CD4-positive, alpha-beta memory T cell (primary cell): ENCODE measurements at regions of chr9 and their contacts with region 1.

Region 1: GRCh38 chr9:121399883-121400607 is 30.0 kb upstream of the STOM start:
- DNase-seq: peak in 4 of 5 donors; percentile 52 to 62 (median 60)
- H3K4me3 ChIP-seq: no peak overlapping the region
- H3K4me3 Mint-ChIP-seq: no peak overlapping the region
- H3K27ac ChIP-seq: no peak overlapping the region
- H3K27ac Mint-ChIP-seq: no peak overlapping the region
- H3K4me1 ChIP-seq: no peaks in the 10 kb centered on the region
- H3K4me1 Mint-ChIP-seq: peaks cover 0 to 2% (median 0%) of the 10 kb centered on the region in 4 donors
- H3K27me3 ChIP-seq: no peaks in the 10 kb centered on the region
- H3K27me3 Mint-ChIP-seq: peaks cover 0 to 2% of the 10 kb centered on the region in 2 donors

Region 2: DNA sequence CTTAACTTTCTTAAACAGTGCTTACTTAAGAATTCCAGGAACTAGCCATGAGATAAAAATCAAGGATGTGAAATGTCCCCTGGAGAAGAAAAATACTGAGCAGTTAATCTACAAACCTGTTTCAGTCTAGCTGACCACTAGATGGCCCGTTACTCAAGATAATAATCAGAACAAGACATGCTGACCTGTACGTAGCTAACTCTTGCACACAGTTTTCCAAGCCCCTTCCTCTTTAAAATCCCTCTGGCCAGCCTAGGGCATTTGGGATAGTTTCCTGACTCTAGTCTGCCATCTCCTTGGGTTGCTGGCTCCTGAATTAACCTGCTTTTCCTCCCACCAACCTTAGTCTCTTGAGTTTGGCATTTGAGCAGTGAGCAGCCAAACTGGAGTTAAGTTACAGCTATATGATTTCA is 414.2 kb before region 1 on chr9:
- CTCF ChIA-PET with region 1: no interaction called
- POLR2A ChIA-PET with region 1: no interaction called
- intact Hi-C with region 1: loop called (anchors 2 kb)
- DNase-seq: no peak
- H3K4me3 ChIP-seq: no peak overlapping the region
- H3K4me3 Mint-ChIP-seq: no peak overlapping the region
- H3K27ac ChIP-seq: no peak overlapping the region
- H3K27ac Mint-ChIP-seq: no peak overlapping the region
- H3K4me1 ChIP-seq: no peaks in the 10 kb centered on the region
- H3K4me1 Mint-ChIP-seq: peaks cover 0 to 5% (median 2%) of the 10 kb centered on the region in 4 donors
- H3K27me3 ChIP-seq: no peaks in the 10 kb centered on the region
- H3K27me3 Mint-ChIP-seq: peaks cover 0 to 2% of the 10 kb centered on the region in 2 donors

Region 3: DNA sequence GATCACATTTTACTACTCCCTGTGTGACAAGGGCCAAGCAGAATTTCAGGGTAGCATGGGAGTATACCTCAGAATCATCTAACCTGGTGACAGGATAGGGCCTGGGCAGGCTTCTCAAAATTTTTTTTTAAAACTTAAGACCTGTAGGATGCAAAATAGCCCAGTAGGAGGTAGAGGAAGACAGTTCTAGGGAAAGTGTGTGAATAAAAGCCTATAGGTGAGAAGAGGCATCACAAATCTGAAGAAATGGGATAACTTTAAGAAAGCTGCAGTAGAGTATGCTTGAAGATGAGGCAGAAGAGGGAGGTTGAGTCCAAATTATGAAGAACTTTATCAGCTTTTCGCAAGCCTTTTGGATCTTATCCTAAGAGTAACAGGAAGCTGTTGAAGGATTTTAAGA is 293.0 kb before region 1 on chr9:
- CTCF ChIA-PET with region 1: no interaction called
- POLR2A ChIA-PET with region 1: no interaction called
- intact Hi-C with region 1: loop called (anchors 2 kb)
- DNase-seq: peak in 4 of 5 donors; percentile 37 to 48 (median 42)
- H3K4me3 ChIP-seq: no peak overlapping the region
- H3K4me3 Mint-ChIP-seq: no peak overlapping the region
- H3K27ac ChIP-seq: no peak overlapping the region
- H3K27ac Mint-ChIP-seq: peak overlapping the region in 6 of 7 donors; percentile 9 to 80 (median 44)
- H3K4me1 ChIP-seq: no peaks in the 10 kb centered on the region
- H3K4me1 Mint-ChIP-seq: peaks cover 20 to 37% (median 22%) of the 10 kb centered on the region in 4 donors
- H3K27me3 ChIP-seq: no peaks in the 10 kb centered on the region
- H3K27me3 Mint-ChIP-seq: no peaks in the 10 kb centered on the region

Region 4: DNA sequence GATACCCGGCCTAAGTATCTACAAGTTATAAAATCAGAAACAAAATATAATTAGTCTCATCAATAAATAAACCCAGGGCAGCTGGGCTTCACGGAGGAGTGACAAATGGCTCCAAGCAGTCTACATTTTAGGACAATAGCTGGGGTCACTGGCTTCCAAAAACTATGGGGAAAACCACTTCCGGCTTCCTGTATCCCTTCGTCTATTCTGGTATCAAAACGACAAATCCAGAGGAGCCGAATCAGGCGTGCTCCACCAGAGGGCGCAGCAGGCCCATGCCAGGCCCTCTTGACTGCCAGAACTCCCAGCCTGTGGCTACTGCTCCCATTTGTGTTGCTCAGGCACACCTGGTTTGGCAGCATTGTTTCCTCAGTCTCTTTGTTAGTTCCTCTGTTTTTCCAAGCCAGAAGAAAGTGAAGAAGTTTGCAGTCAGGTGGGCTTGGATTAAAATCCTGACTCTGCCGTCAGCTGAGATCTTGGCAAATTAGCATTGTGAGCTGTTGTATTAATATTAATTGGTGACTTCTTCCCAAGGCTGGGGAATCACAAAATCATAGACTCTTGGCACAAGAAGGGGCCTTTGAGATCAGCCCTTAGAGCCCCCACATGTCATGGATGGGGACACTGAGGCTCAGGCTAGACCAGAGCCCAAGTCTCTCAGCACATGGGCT is 186.8 kb before region 1 on chr9:
- CTCF ChIA-PET with region 1: interaction called, 26 read pairs
- POLR2A ChIA-PET with region 1: no interaction called
- intact Hi-C with region 1: loop called (anchors 2 kb)
- DNase-seq: peak; percentile 40 to 66 (median 49)
- H3K4me3 ChIP-seq: no peak overlapping the region
- H3K4me3 Mint-ChIP-seq: no peak overlapping the region
- H3K27ac ChIP-seq: no peak overlapping the region
- H3K27ac Mint-ChIP-seq: peak overlapping the region in 1 of 7 donors; percentile 47
- H3K4me1 ChIP-seq: peaks cover 5% of the 10 kb centered on the region
- H3K4me1 Mint-ChIP-seq: peaks cover 0 to 7% (median 3%) of the 10 kb centered on the region in 4 donors
- H3K27me3 ChIP-seq: no peaks in the 10 kb centered on the region
- H3K27me3 Mint-ChIP-seq: no peaks in the 10 kb centered on the region

Region 5: GRCh38 chr9:121350993-121351561 is 49.0 kb before region 1 on chr9:
- CTCF ChIA-PET with region 1: interaction called, 10 read pairs
- POLR2A ChIA-PET with region 1: no interaction called
- intact Hi-C with region 1: no loop called
- DNase-seq: no peak
- H3K4me3 ChIP-seq: no peak overlapping the region
- H3K4me3 Mint-ChIP-seq: no peak overlapping the region
- H3K27ac ChIP-seq: no peak overlapping the region
- H3K27ac Mint-ChIP-seq: peak overlapping the region in 1 of 7 donors; percentile 18
- H3K4me1 ChIP-seq: peaks cover 55% of the 10 kb centered on the region
- H3K4me1 Mint-ChIP-seq: peaks cover 27 to 54% (median 41%) of the 10 kb centered on the region in 4 donors
- H3K27me3 ChIP-seq: no peaks in the 10 kb centered on the region
- H3K27me3 Mint-ChIP-seq: no peaks in the 10 kb centered on the region

Region 6: GRCh38 chr9:121376214-121376830 is 23.7 kb before region 1 on chr9:
- CTCF ChIA-PET with region 1: interaction called, 30 read pairs
- POLR2A ChIA-PET with region 1: interaction called, 3 read pairs
- intact Hi-C with region 1: loop called (anchors 1 kb)
- DNase-seq: peak in 3 of 5 donors; percentile 24 to 30 (median 29)
- H3K4me3 ChIP-seq: no peak overlapping the region
- H3K4me3 Mint-ChIP-seq: no peak overlapping the region
- H3K27ac ChIP-seq: no peak overlapping the region
- H3K27ac Mint-ChIP-seq: no peak overlapping the region
- H3K4me1 ChIP-seq: peaks cover 3% of the 10 kb centered on the region
- H3K4me1 Mint-ChIP-seq: peaks cover 9 to 21% (median 10%) of the 10 kb centered on the region in 4 donors
- H3K27me3 ChIP-seq: no peaks in the 10 kb centered on the region
- H3K27me3 Mint-ChIP-seq: no peaks in the 10 kb centered on the region

Region 7: GRCh38 chr9:121383715-121384114 is 16.3 kb before region 1 on chr9:
- CTCF ChIA-PET with region 1: interaction called, 30 read pairs
- POLR2A ChIA-PET with region 1: no interaction called
- intact Hi-C with region 1: no loop called
- DNase-seq: no peak
- H3K4me3 ChIP-seq: no peak overlapping the region
- H3K4me3 Mint-ChIP-seq: no peak overlapping the region
- H3K27ac ChIP-seq: no peak overlapping the region
- H3K27ac Mint-ChIP-seq: no peak overlapping the region
- H3K4me1 ChIP-seq: no peaks in the 10 kb centered on the region
- H3K4me1 Mint-ChIP-seq: no peaks in the 10 kb centered on the region
- H3K27me3 ChIP-seq: no peaks in the 10 kb centered on the region
- H3K27me3 Mint-ChIP-seq: peaks cover 2 to 3% of the 10 kb centered on the region in 2 donors

Region 8: DNA sequence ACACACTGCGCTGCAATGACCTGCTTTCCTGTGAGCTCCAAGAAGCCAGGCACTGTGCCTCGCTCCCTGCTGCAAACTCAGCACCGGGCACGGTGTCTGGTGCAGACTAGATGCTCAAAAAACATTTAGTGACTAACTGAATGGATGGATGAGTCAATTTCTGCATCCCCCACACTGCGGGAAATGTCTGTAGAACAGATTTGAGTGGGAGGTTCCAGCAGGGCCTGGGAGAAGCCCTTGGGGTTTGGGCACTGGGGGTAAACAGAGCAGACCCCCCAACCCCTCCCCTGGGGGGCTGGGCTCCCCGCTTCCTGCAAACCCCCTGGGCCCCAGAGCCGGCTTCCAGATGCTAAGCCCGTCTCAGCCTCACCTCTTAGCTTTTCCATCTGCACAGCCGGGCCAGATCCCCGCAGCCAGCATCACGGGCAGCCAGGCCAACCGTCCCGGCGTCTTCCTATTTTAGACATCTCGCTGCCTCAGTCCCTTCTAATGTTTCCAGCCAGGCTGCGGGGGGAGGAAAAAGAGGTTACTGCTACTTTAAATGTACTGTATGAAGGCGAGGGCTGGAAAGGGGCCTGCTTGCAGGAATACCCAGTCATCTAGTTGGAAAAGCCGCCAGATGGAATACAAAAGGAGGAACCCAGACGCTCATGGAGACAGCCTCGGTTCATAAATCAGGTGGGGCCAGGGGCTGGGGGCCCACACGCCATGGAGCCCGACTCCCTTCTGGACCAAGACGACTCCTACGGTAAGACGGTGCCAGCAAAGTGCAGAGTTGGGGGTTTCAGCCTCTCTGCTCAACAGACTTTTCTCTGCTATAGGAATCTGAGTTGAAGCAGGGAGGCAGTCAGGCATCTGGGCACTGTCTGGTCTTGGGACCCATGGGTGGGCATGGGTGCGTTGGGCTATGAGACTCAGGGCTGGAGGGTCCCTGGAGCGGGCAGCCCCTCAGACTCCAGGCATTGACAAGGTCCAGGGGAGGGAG is 166.7 kb after region 1 on chr9:
- CTCF ChIA-PET with region 1: no interaction called
- POLR2A ChIA-PET with region 1: no interaction called
- intact Hi-C with region 1: no loop called
- DNase-seq: no peak
- H3K4me3 ChIP-seq: no peak overlapping the region
- H3K4me3 Mint-ChIP-seq: no peak overlapping the region
- H3K27ac ChIP-seq: no peak overlapping the region
- H3K27ac Mint-ChIP-seq: no peak overlapping the region
- H3K4me1 ChIP-seq: no peaks in the 10 kb centered on the region
- H3K4me1 Mint-ChIP-seq: no peaks in the 10 kb centered on the region
- H3K27me3 ChIP-seq: no peaks in the 10 kb centered on the region
- H3K27me3 Mint-ChIP-seq: peaks cover 5 to 10% of the 10 kb centered on the region in 2 donors